GM10248 (cell line): ENCODE measurements at regions of chr9 and their contacts with region 1.

Region 1: DNA sequence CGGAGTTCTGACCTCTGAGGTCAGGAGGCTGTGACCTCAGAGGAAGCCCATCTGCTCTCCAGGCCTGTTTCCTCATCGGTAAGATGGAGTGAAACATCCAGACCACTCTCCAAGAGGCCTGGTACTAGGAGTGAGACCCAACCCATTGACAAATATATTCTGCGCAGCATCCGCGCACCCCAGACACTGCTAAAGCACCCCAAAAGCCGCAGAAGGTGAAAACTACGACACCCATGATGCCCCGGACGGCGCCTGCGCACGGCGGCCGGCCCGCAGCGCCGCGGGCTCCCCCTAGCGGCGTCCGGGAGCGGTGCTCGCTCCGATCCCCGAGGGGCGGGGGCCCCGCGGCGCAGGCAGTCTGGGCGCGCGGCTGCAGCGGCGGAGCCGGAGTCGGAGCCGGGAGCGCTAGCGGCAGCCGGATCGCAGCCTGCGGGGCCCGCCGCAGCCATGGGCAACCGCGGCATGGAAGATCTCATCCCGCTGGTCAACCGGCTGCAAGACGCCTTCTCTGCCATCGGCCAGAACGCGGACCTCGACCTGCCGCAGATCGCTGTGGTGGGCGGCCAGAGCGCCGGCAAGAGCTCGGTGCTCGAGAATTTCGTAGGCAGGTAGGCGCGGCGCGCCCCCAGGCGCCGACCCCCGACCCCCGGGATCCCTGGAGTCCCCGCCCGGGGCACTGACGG is at the start of gene DNM1:
- DNase-seq: peak; percentile 98
- CTCF ChIP-seq: peak; percentile 98

Region 2: GRCh38 chr9:128191406-128192046 is 11.6 kb before region 1 on chr9 and contains the start of gene CIZ1:
- CTCF ChIA-PET with region 1: interaction called, 23 read pairs
- POLR2A ChIA-PET with region 1: no interaction called
- DNase-seq: peak; percentile 93
- CTCF ChIP-seq: peak; percentile 86

Region 3: DNA sequence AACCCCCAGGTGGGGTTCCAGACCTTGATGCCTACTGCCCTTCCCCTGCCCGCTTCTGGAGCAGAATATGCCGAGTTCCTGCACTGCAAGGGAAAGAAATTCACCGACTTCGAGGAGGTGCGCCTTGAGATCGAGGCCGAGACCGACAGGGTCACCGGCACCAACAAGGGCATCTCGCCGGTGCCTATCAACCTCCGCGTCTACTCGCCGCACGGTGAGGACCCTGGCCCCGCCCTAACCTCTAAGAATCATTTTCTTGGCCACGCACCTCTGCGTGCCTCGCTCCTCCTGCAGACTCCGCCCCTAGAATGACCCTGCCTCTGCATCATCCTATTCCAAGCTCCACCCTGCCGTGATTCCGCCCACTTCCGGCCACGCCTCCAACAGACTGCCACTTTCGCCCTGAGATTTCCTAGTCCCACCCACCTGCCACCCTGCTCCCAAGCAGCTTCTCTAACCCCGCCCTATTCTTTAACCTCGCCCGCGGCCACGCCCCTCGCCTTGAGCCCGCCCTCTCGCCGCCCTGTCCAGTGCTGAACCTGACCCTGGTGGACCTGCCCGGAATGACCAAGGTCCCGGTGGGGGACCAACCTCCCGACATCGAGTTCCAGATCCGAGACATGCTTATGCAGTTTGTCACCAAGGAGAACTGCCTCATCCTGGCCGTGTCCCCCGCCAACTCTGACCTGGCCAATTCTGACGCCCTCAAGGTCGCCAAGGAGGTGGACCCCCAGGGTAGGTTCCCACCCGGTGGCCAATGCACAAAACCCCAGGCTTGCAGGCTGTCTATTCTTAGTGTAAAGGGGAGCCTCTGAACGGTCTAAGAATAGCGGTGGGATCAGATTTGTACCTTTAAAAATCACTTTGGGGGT is 15.6 kb after region 1 on chr9:
- CTCF ChIA-PET with region 1: interaction called, 16 read pairs
- POLR2A ChIA-PET with region 1: interaction called, 4 read pairs
- DNase-seq: peak; percentile 97
- CTCF ChIP-seq: no peak

Region 4: DNA sequence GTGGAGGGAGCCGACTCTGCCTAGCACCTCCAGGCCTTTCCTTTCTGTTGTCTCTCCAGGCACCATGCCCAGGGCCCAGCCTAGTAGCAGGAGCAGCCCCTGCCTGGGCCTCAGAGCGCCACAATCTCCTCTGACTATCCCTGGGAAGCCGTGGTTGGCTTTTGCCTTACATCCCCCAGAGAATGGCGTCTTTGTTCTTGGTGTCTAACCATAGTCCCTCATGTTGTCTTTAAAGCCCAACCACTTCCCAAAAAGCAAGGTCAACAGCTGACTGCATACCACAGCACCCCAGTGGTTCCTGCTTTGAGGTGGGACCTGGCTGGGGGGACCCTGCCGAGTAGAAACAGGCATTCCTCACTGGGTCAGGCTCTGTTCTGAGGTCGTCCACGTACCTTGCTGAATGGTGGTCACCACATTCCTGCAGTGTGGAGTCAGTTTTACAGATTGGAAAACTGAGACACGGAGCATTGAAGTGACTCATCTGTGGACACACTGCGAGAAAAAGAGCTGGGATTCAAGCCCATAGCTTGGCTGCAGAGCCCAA is 203.8 kb after region 1 on chr9:
- CTCF ChIA-PET with region 1: no interaction called
- POLR2A ChIA-PET with region 1: no interaction called
- DNase-seq: no peak
- CTCF ChIP-seq: no peak